HEK293 (cell line): ENCODE measurements at regions of chr2 and their contacts with region 1.

Region 1: GRCh38 chr2:177164584-177165052 is 48.0 kb upstream of the HNRNPA3 start:
- H3K4me3 ChIP-seq: peak overlapping the region; percentile 0; the same call in 1 of the 2 replicates
- H3K27ac ChIP-seq: no peak overlapping the region
- H3K4me1 ChIP-seq: peaks cover 9% of the 10 kb centered on the region
- CTCF ChIP-seq: peak; percentile 96

Region 2: DNA sequence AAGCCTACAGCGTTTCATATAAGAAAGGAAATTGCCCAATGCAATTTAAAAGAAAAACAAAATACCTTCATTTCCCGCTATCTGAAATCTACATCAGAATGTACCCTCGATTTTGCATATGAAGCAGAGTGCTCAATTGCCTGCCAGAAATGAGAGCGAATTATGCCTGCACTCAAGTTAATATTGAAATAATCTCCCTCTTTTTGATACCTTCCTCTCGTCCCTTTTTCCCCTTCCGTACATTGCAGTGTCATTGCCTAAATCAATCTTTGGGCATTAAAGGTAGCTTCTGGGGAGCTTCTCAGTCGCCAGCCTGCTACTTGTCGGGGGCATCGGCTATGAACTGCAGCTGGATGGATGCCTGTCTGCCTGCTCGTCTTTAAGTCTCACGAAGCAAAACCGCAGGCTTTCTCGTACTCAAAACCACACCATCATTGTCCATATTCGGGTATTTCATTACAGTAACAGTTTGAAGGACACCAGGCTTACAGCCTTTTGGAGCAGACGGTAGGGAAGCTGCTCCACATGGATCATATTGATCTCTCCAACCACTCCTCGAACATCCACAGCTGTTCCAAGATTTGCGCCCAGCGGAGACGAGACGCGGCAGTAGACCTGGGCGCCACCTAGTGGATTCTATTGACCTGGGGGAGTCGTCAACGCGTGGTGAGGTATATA is 16.0 kb before region 1 on chr2:
- CTCF ChIA-PET with region 1: interaction called, 15 read pairs
- POLR2A ChIA-PET with region 1: no interaction called
- H3K4me3 ChIP-seq: peak overlapping the region; percentile 42
- H3K27ac ChIP-seq: no peak overlapping the region
- H3K4me1 ChIP-seq: no peaks in the 10 kb centered on the region
- CTCF ChIP-seq: peak; percentile 88

Region 3: GRCh38 chr2:177229448-177230242 is 65.0 kb after region 1 on chr2:
- CTCF ChIA-PET with region 1: interaction called, 12 read pairs
- POLR2A ChIA-PET with region 1: interaction called, 3 read pairs
- H3K4me3 ChIP-seq: no peak overlapping the region
- H3K27ac ChIP-seq: no peak overlapping the region
- H3K4me1 ChIP-seq: no peaks in the 10 kb centered on the region
- CTCF ChIP-seq: no peak

Region 4: DNA sequence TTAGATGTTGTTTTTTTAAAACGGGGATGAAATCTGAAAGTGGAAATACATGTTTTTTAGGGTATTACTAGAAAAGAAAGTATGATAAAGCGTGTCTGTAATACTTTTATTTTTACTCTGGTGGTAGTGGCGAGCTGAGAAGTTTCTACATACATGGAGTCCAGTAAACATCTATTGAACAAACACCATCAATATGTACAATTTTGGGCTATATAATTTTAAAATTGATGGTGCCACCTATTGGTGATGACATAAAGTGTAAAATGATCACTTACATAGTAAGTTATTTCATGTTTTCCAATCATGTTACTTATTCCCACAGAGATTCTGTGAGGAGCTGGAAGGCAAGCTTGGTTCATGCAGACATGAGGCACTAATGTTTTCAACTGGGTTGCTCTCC is 131.4 kb after region 1 on chr2:
- CTCF ChIA-PET with region 1: interaction called, 37 read pairs
- POLR2A ChIA-PET with region 1: no interaction called
- H3K4me3 ChIP-seq: no peak overlapping the region
- H3K27ac ChIP-seq: no peak overlapping the region
- H3K4me1 ChIP-seq: no peaks in the 10 kb centered on the region
- CTCF ChIP-seq: no peak

Region 5: GRCh38 chr2:177419274-177419673 is 254.7 kb after region 1 on chr2:
- CTCF ChIA-PET with region 1: interaction called, 22 read pairs
- POLR2A ChIA-PET with region 1: no interaction called
- H3K4me3 ChIP-seq: no peak overlapping the region
- H3K27ac ChIP-seq: no peak overlapping the region
- H3K4me1 ChIP-seq: no peaks in the 10 kb centered on the region; the same call in 1 of the 2 replicates
- CTCF ChIP-seq: no peak